Cardiac septum (tissue), 1 donor: ENCODE measurements at regions of chr2 and their contacts with region 1.

Region 1: GRCh38 chr2:108534584-108535230 is 437 bp downstream of the LIMS1 start:
- DNase-seq: peak; percentile 78

Region 2: DNA sequence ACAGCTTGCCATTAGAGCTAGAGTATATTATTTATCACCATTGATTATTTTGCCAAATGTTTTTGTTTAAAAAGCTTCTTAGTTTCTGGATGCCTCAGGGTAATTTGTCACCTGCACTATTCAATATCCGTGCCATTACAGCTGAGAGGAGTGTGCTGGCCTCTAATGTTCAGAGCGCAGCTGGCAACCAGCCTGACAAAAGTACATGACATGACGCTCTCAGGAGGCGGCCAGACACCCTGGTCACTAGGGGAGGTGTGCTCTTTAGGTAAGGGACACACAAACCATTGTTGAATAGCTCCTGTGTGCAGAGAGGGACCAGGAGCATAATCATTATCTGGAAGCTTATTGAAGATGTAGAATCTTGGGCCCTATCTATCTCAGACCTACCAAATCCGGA is 19.8 kb after region 1 on chr2:
- intact Hi-C with region 1: loop called (anchors 1 kb)
- DNase-seq: no peak

Region 3: GRCh38 chr2:108575132-108575966 is 40.6 kb after region 1 on chr2:
- intact Hi-C with region 1: loop called (anchors 5 kb)
- DNase-seq: no peak